Vagina (tissue), 2 donors: ENCODE measurements at regions of chr20 and their contacts with region 1.

Region 1: DNA sequence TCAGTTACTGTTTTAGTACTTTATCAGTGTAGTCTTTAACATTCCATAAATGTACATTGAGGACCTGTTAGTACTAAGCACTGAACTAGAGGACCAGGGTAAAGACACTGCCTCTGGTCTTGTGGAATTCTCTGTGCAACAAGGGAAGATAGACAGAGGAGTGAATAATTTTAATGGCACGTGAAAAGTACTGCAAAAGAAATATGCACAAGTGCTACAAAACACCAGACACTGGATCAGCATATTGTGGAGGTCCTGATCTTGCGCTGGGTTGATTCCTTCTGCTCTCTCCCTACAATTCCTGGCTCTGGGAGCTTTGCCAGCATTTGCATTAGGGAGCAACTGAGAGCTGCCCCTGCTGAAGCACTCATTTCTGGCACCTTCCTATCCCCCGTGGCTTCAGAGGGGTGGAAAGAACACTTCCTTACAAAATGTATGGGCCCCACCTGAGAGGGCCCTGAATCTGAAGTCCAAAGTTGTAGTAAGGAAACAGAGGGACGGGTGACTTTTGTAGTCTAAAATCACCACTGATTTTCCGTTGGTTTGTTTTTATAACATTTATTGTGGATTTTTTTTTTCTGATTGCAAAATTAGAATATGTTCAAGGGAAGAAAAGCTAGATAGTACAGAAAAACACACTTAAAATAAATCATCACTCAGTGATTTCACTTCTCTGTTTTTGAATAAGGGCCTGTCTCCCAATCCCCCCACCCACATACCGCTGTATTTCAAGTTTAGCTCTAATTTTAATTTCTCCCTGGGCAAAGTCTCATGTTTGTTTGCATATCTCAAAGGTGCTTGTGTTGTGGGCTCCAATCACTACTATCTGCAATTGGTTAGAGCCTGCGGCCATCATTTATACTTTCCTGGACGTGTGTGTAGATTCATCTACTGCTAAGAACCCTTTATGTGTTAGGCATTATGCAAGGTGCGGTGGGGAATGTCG is 4.9 kb downstream of the PKIG start:
- DNase-seq: no peak
- H3K4me3 ChIP-seq: no peak overlapping the region
- H3K27ac ChIP-seq: peak overlapping the region; percentile 85
- H3K4me1 ChIP-seq: peaks cover 34% of the 10 kb centered on the region
- H3K27me3 ChIP-seq: no peaks in the 10 kb centered on the region
- CTCF ChIP-seq: no peak
- POLR2A ChIP-seq: no peak

Region 2: GRCh38 chr20:44552950-44553908 is 34.1 kb before region 1 on chr20:
- intact Hi-C with region 1: loop called (anchors 1 kb)
- DNase-seq: no peak
- H3K4me3 ChIP-seq: no peak overlapping the region
- H3K27ac ChIP-seq: peak overlapping the region; percentile 82
- H3K4me1 ChIP-seq: peaks cover 14% of the 10 kb centered on the region
- H3K27me3 ChIP-seq: no peaks in the 10 kb centered on the region
- CTCF ChIP-seq: no peak
- POLR2A ChIP-seq: no peak